ENCODE measurements at regions of chr10 and their contacts with region 1.

Region 1: DNA sequence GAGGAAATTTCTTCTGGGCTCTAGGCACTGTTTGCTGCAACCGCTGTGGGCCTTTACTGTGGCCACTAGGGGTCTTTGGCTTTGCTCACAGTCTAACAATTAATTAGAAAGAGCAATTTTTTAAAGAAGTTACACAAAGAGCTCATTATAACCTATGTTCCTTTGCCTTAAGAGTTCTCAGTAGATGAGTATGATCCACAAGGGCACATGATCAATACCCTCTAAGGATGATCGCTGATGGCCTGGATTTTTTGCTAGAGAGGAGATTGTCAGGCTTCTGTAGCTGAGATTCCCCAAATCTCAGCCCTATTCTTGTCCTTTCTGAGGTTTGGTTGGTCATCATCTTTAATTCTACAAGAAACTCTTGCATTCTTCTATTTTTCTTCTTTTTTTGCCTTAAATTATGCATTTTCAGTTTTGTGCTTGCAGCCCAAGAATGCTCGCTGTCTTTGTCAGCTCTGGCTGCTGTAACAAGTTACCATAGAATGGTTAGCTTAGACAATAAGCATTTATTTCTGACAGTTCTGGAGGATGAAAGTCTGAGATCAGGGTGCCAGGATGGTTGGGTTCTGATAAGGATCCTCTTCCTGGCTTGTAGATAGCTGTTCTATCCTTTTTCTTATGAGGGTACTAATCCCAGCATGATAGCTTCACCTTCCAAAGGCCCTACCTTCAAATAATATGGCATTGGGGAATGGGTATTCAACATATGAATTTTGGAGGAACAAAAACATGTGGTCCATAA is 81.0 kb upstream of the RHOBTB1 start:
- H3K4me3 ChIP-seq: no peak overlapping the region
- H3K27ac ChIP-seq: no peak overlapping the region
- H3K4me1 ChIP-seq: no peaks in the 10 kb centered on the region
- CTCF ChIP-seq: no peak

Region 2: DNA sequence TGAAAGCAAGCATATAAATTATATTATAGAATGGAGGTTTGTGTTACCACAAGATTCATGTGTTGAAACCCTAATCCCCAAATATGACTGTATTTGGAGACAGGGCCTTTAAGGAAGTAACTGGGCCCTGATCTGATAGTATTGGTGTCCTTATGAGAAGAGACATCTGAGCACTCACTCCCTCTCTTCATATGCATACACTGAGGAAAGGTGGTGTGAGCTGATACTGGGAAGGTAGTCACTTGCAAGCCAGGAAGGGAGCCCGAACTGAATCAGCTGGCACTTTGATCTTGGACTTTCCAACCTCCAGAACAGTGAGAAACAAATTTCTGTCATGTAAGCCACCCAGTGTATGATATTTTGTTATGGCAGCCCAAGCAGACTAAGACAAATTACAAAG is 14.2 kb before region 1 on chr10:
- CTCF ChIA-PET with region 1: interaction called, 12 read pairs
- POLR2A ChIA-PET with region 1: no interaction called
- H3K4me3 ChIP-seq: no peak overlapping the region
- H3K27ac ChIP-seq: no peak overlapping the region
- H3K4me1 ChIP-seq: no peaks in the 10 kb centered on the region
- CTCF ChIP-seq: no peak